HepG2 (cell line): ENCODE measurements at regions of chr11 and their contacts with region 1.

Region 1: GRCh38 chr11:124586238-124586860 is 16.6 kb downstream of the OR8A1 start:
- DNase-seq: peak; percentile 33
- ATAC-seq: peak; percentile 65; the same call in 2 of the 3 replicates
- H3K4me3 ChIP-seq: no peak overlapping the region
- H3K27ac ChIP-seq: no peak overlapping the region
- H3K4me1 ChIP-seq: no peaks in the 10 kb centered on the region
- H3K27me3 ChIP-seq: peaks cover 0 to 3% of the 10 kb centered on the region in 2 experiments; a peak in 1 of 5 replicates
- CTCF ChIP-seq: peak; percentile 67
- EP300 ChIP-seq: no peak
- POLR2A ChIP-seq: no peak
- RAD21 ChIP-seq: no peak

Region 2: DNA sequence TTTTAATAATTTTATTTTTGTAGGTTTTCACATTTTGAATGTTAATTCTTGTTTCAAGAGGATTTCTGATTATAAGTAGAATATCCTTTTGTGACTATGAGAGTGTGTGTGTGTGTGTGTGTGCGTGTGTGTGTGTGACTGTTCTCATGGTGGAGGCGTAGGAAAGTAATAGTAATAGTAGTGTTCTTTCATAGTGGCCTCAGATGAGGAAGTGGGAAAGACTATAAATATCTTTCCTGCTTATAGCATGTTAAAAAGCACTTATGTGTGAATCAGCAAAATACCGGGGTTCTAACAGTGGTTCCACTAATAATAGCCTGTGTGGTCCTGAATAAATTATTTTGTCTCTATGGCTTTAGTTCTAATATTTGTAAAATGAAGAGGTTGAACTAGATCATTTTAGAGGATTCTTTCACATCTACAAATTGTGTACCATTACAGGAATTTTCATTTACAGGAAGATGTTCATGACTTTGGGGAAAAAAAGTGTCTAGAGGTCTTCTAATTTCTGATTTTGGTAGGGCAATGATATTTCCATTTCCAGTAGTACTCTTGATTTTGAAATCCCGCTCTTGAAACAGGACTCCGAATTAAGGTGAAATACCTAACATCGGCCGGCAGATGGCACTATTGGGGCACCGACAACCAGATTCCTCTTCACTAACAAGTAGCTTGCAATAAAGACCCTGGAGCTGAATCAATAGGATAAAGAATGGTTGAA is 515.3 kb before region 1 on chr11:
- CTCF ChIA-PET with region 1: no interaction called
- POLR2A ChIA-PET with region 1: no interaction called
- in situ Hi-C with region 1: no loop called
- intact Hi-C with region 1: loop called (anchors 2 kb)
- DNase-seq: peak; percentile 54
- ATAC-seq: no peak
- H3K4me3 ChIP-seq: no peak overlapping the region
- H3K27ac ChIP-seq: no peak overlapping the region
- H3K4me1 ChIP-seq: 0 out of 2 replicates have a peak, but pooled peaks cover 3% of the 10 kb centered on the region
- H3K27me3 ChIP-seq: peaks cover 8% of the 10 kb centered on the region in 2 experiments; a peak in 3 of 5 replicates
- CTCF ChIP-seq: peak; percentile 72
- EP300 ChIP-seq: no peak
- POLR2A ChIP-seq: no peak
- RAD21 ChIP-seq: peak; percentile 26; the same call in 1 of the 2 replicates

Region 3: DNA sequence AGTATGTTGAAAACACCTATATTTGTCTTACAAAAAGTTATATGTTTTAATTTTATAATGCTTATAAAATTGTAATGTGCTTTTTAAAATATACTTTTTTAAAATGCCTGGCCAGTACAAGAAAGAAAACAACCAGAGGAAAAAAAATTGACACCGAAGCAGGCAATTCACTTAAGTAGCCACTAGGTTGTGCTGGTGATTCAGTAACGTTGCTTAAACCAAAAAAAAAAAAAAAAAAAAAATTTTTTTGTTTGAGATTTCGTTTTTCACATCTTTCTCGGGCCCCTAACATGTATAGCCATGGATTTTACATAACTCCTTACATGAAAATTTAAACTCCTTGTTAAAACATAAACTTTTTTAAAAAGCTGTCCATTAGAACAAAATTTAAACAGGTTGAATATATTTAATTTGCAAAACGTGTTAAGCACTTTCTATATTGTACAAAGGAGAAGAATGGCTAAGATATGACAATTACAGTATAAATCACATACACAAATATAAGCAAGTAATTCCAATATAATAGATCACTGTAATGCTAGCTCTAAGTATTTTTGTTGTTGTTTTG is 170.9 kb before region 1 on chr11:
- CTCF ChIA-PET with region 1: interaction called, 29 read pairs
- POLR2A ChIA-PET with region 1: no interaction called
- in situ Hi-C with region 1: loop called (anchors 5 kb)
- intact Hi-C with region 1: loop called (anchors 1 kb)
- DNase-seq: peak; percentile 37
- ATAC-seq: no peak
- H3K4me3 ChIP-seq: no peak overlapping the region
- H3K27ac ChIP-seq: no peak overlapping the region
- H3K4me1 ChIP-seq: no peaks in the 10 kb centered on the region
- H3K27me3 ChIP-seq: no peaks in the 10 kb centered on the region; a peak in 2 of 5 replicates
- CTCF ChIP-seq: peak; percentile 43; the same call in 1 of the 2 replicates
- EP300 ChIP-seq: no peak
- POLR2A ChIP-seq: no peak
- RAD21 ChIP-seq: no peak